Cardiac septum (tissue), 1 donor: ENCODE measurements at regions of chr18 and their contacts with region 1.

Region 1: DNA sequence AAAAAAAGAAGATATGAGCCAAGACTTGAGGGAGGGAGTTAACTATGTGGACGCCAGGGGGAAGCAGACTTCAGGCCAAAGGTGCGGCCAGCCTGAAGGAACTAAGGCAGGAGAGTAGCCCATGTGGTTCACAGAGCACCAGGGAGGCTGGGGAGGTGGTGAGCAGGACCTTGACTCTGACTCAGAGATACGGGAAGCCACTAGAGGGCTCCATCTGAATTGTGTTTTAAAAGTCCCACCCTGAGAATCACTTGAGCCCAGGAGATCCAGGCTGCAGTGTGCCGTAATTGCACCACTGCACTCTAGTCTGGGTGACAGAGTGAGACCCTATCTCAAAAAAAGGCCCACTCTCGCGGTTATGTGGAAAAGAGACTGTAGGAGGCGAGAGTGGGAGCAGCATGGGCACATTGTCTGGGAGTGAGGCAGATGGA is 12.3 kb downstream of the CEP192 start:
- DNase-seq: no peak

Region 2: DNA sequence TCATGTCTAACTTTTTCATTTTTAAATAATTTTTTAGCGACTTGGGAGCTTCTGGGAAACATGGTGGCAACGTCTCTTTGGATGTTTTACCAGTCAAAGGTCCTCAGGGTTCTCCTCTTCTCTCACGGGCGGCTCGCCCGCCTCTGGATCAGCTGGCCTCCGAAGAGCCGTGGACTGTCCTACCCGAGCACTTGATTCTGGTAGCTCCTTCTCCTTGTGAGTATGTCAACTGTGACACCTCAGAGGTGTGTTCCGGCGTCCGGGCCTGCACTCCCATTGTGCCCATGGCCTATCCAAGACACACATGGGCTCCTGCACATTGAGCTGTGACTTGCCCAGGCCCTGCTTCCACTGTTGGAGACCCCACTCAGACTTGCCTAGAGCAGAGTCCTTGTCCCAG is 92.0 kb after region 1 on chr18:
- intact Hi-C with region 1: loop called (anchors 10 kb)
- DNase-seq: no peak

Region 3: DNA sequence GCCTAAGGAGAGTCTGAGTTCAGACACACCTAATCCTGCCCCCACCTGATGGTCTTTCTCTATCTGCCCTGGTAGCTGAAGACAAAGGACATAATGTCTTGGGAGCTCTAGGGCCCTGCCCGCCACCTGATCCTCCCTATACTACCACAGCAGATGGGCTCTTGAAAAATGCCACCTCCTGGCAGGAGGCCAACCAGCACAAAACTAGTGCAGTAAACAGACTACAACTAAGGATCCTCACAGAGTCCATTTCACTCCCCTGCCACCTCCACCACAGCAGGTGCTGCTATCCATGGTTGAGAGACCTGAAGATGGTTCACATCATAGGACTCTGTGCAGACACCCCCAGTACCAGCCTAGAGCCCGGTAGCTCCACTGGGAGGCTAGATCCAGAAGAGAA is 162.5 kb after region 1 on chr18:
- intact Hi-C with region 1: loop called (anchors 10 kb)
- DNase-seq: no peak

Region 4: DNA sequence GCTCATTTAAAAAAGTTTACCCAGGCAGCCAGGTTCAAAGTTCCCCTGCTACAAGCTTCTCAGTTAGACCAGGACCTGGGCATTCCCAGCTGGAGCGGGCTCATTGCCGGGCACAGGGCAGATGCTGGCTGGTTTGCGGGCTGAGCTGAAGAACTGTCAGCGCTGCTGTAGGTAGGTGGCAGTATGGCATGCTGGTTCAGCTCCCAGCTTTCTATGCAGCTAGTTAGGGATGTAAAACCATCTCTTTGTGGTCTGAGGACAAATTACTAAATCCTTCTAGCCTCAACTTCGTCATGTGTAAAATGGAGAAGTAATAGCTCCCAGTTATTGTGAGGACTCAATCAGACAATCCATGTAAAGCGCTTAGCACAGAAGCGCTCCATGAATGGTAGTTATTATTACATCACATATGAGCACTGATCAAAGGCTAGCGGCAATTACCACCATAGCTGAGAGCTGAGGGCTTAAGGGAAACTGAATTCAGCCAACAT is 212.7 kb after region 1 on chr18:
- intact Hi-C with region 1: no loop called
- DNase-seq: peak; percentile 84